HCT116 (cell line): ENCODE measurements at regions of chr18 and their contacts with region 1.

Region 1: DNA sequence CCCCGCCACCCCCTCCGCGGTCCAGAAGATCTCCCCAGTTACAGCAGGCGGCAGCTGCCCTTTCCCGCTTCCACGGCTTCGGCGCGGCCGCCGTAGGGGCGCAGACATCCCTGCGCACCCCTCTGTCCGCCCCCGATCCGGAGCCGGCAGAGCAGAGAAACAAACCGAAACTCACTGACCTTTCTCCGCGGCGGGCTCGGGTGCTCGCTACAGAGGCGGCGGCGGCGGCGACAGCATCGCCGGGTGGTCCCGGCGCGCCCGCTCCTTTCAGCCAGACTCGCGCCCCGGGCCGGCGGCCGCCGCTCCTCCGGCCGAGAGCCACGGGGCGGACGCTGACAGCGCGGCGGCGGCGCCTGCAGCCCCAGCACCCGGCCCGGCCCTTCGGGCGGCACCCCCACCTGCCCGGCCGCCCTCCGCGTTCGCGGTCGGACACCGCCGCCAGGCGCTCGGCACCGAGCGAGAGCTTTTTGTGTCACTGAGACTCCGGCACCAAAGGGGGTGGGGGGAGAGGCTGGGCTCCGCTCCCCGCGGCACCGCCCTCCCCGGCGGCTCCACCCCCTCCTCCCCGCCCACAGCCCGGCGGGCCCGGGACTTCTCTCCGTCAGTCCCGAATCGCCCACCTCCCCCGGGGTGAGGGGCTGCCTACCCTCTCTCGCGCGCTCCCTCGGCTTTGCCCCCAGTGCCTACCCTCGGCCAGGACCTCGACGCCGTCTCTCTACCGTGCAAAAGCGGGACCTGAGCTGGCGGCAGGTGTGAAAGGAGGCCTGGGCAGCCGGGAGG is 1.4 kb upstream of the RNF152 start:
- DNase-seq: peak; percentile 18
- ATAC-seq: peak; percentile 93
- H3K4me3 ChIP-seq: peak overlapping the region; percentile 48 to 61
- H3K27ac ChIP-seq: no peak overlapping the region
- H3K4me1 ChIP-seq: peaks cover 0 to 15% of the 10 kb centered on the region in 2 experiments; a peak in 1 of 4 replicates
- H3K27me3 ChIP-seq: peaks cover 8% of the 10 kb centered on the region; the same call in 1 of the 2 replicates
- CTCF ChIP-seq: 0 out of 6 replicates have a peak, but pooled peaks of 1 of the 3 experiments have one; percentile 21
- POLR2A ChIP-seq: no peak
- RAD21 ChIP-seq: peak; percentile 57

Region 2: DNA sequence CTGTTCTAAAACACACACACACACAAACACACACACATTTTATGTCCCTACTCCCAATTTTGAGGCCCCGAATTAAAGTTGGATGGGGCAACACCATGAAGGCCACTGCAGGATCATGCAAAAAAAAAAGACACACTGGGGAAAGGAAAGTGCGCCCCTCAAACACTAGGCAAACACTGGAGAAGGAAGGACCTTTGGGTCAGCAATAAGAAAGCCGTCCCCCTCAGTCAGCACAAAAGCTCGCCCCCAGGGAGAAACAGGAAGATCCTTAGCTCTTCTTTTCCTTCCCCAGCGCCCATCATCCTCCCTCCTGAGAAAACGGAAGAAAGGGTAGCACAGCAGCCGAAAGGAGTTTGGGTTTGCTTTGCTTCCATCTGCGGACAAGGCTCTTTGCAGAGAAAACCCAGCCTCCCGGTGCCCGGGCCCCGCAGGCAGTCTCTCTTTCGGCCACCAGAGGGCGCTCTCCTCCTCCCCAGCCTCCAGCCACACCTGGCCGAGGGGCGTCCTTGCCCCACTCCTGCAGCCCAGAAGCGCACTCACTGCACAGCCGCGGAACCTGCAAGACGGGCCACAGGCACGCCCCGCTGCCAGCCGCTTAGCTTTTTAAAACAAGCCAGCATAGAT is 312.5 kb before region 1 on chr18:
- CTCF ChIA-PET with region 1: interaction called, 5 read pairs
- POLR2A ChIA-PET with region 1: no interaction called
- RAD21 ChIA-PET with region 1: no interaction called
- intact Hi-C with region 1: loop called (anchors 5 kb)
- DNase-seq: peak; percentile 22
- ATAC-seq: peak; percentile 97
- H3K4me3 ChIP-seq: peak overlapping the region; percentile 39 to 46
- H3K27ac ChIP-seq: no peak overlapping the region
- H3K4me1 ChIP-seq: peaks cover 0 to 9% of the 10 kb centered on the region in 2 experiments; a peak in 2 of 4 replicates
- H3K27me3 ChIP-seq: no peaks in the 10 kb centered on the region
- CTCF ChIP-seq: peak; percentile 70 to 98 (median 95)
- POLR2A ChIP-seq: no peak
- RAD21 ChIP-seq: peak; percentile 79